ENCODE measurements at regions of chr9 and their contacts with region 1.

Region 1: DNA sequence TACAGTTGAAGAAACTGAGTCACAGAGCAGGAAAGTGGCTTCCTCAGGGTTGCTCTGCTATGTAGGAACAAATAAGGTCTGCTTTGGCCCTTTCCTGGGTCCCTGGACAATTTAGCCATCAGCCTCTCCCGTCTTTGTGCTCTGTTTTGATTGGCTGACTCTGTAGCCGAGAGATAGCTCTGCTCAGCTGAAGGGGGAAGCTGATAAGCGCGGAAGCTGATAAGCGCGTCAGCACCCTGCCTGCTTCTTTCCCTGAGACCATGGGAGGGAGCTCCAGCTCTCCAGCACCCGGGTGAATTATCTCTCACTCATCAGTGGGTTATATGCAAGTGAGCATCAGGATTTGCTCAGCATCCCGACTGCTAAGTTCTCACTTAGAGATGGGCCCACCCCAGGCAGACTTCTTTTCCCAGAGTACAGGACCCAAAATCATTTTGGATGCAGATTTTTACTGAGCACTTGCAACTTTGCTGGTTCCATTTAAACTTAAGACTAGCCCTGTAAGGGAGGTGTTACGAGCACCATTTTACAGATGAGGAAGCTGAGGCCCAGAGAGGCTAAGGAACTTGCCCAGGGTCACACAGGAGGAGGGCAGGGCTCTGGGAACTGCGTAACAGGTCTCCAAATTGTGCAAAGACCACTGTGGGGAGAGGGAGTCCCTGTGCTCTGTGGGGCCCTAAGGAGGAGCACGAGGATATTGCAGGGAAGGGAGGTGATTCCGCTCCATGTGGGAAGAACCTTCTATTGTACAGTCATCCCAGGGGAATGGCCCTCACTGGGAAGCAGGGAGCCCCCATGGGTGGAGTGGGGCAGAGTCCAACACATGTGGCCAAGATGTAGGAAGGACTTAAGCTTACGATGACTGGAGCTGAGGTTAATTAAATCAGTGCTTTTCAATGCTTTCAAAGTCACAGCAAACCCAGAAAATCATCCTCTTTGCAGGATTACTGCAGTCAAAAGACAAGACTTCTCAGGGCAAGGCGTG is 83.7 kb upstream of the ORM1 start:
- DNase-seq: no peak
- H3K4me3 ChIP-seq: no peak overlapping the region
- H3K27ac ChIP-seq: no peak overlapping the region
- H3K4me1 ChIP-seq: no peaks in the 10 kb centered on the region
- H3K27me3 ChIP-seq: peaks cover 9% of the 10 kb centered on the region
- CTCF ChIP-seq: no peak

Region 2: DNA sequence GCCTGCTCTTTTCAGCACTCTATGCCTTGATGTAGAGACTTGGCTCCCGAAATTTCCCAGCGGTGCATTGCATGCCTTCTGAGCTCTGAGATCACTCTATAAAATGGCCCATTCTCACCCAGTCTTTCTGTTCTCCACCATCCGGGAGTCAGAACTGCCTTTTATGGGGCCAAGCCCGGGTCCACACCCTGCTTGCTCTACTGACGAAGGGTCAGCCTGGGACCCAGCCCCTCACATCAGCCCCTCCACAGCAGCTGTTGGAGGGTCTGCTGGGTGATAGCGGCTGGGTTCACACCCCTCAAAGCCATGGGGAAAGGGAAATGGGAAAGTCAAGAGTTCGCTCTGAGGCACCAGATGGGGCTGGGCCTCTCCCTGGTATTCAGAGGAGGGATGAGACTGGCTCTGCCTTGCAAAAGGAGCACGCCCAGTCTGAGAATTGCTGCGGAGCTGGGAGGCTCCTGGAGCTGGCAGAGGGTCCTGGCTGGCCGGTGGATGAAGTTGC is 17.7 kb after region 1 on chr9:
- CTCF ChIA-PET with region 1: interaction called, 12 read pairs
- POLR2A ChIA-PET with region 1: no interaction called
- intact Hi-C with region 1: no loop called
- DNase-seq: no peak
- H3K4me3 ChIP-seq: no peak overlapping the region
- H3K27ac ChIP-seq: no peak overlapping the region
- H3K4me1 ChIP-seq: no peaks in the 10 kb centered on the region
- H3K27me3 ChIP-seq: peaks cover 49% of the 10 kb centered on the region
- CTCF ChIP-seq: no peak

Measured in PC-9 (cell line).